AG04450 (cell line): ENCODE measurements at regions of chr12 and their contacts with region 1.

Region 1: DNA sequence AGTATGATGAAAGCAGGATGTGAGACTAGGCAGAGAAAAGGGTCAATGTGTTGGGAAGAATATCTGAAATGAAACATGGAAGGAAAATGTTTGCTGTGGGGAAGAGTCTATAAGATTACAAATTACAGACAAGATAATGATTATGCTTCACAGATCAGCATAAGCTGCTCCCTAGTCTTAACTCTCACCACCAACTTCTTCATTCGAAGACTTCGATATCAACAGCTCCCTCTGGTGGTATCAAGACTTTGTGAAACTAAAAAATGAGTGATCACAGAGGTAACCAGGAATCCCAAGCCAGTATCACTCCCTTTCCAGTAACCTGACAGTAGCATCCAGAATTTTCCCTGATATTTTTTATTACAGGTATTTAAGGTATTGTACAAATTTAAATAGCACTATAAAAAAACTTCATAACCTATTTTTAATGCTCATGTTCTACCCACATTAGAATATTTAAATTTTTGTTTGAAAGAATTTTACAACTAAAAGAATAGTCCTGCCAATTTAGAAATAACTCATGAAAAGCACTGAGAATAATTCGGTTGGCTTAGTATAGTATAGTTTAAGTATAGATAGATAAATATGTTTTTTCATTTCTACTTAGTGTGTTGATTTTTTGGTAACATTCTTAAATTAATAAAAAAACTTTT is 84.4 kb downstream of the C2CD5 start:
- DNase-seq: no peak
- H3K4me3 ChIP-seq: no peak overlapping the region
- H3K27ac ChIP-seq: no peak overlapping the region
- H3K27me3 ChIP-seq: no peaks in the 10 kb centered on the region
- CTCF ChIP-seq: peak; percentile 75

Region 2: GRCh38 chr12:22069856-22070565 is 390.0 kb before region 1 on chr12:
- CTCF ChIA-PET with region 1: no interaction called
- POLR2A ChIA-PET with region 1: no interaction called
- DNase-seq: no peak
- H3K4me3 ChIP-seq: no peak overlapping the region
- H3K27ac ChIP-seq: no peak overlapping the region
- H3K27me3 ChIP-seq: peaks cover 3% of the 10 kb centered on the region
- CTCF ChIP-seq: no peak

Region 3: DNA sequence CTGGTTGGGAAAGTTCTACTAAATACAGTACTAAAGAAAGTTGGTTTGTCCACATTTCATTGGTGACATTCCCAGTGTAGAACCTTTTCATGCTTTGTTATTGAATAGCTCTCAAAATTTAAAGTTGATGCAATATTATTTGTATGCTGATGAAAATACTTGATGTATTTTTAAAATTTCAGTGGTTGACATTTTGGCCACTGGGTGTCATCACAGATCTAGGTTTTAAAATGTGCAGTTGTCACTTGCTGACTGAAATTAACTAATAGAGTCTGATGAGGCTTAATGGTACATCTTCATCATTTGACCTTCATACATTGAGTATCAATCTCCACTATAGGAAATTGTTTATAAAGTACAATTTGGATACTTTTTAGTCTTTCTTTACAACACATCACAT is 376.8 kb before region 1 on chr12:
- CTCF ChIA-PET with region 1: interaction called, 23 read pairs
- POLR2A ChIA-PET with region 1: no interaction called
- DNase-seq: no peak
- H3K4me3 ChIP-seq: no peak overlapping the region
- H3K27ac ChIP-seq: no peak overlapping the region
- H3K27me3 ChIP-seq: peaks cover 8% of the 10 kb centered on the region
- CTCF ChIP-seq: peak; percentile 41

Region 4: DNA sequence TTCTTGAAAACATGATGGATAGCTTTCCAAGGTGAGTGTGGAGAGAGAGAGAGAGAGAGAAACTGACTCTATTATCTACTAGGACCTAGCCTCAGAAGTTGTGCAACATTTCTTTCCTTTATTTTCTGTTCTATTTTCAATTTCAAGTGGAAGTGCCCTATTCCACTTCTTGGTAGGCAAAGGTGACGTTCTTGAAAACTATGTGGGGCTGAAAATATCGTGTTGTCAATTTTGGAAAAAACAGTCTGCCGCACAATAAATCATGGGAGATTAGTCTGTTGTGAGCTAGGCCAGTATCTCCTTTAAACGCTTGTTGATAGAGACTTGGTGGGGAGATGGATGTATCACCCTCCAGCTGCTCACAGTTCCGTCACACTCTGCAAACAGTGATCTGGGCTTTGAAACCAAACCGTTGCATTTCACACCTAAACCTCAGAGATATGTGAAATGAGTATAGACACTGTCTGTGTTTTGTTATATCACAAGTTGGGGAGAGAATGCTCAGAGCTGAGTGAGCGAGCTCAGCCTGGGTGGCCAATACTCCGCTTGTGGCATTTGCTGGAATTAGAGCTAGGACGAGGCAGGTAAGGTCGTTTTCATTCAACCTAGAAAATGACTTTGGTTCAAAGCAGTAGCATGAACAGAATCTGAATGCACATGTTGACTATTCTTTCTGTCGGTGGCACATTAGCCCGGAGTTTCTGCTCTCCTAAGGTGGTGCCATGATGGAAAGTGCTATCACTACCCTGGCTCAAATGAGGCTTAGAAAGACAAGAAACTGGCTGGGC is 50.4 kb before region 1 on chr12:
- CTCF ChIA-PET with region 1: no interaction called
- POLR2A ChIA-PET with region 1: no interaction called
- DNase-seq: no peak
- H3K4me3 ChIP-seq: no peak overlapping the region
- H3K27ac ChIP-seq: no peak overlapping the region
- H3K27me3 ChIP-seq: no peaks in the 10 kb centered on the region
- CTCF ChIP-seq: no peak

Region 5: GRCh38 chr12:22443379-22444316 is 16.3 kb before region 1 on chr12:
- CTCF ChIA-PET with region 1: interaction called, 84 read pairs
- POLR2A ChIA-PET with region 1: no interaction called
- DNase-seq: peak; percentile 36
- H3K4me3 ChIP-seq: no peak overlapping the region
- H3K27ac ChIP-seq: no peak overlapping the region
- H3K27me3 ChIP-seq: peaks cover 5% of the 10 kb centered on the region
- CTCF ChIP-seq: peak; percentile 82

Region 6: GRCh38 chr12:22494319-22494718 is 34.4 kb after region 1 on chr12:
- CTCF ChIA-PET with region 1: interaction called, 18 read pairs
- POLR2A ChIA-PET with region 1: no interaction called
- DNase-seq: no peak
- H3K4me3 ChIP-seq: no peak overlapping the region
- H3K27ac ChIP-seq: no peak overlapping the region
- H3K27me3 ChIP-seq: no peaks in the 10 kb centered on the region
- CTCF ChIP-seq: no peak

Region 7: GRCh38 chr12:22670762-22671161 is 210.8 kb after region 1 on chr12:
- CTCF ChIA-PET with region 1: interaction called, 18 read pairs
- POLR2A ChIA-PET with region 1: no interaction called
- DNase-seq: no peak
- H3K4me3 ChIP-seq: no peak overlapping the region
- H3K27ac ChIP-seq: no peak overlapping the region
- H3K27me3 ChIP-seq: no peaks in the 10 kb centered on the region
- CTCF ChIP-seq: no peak